Left colon (tissue), 2 donors: ENCODE measurements at regions of chr15 and their contacts with region 1.

Region 1: DNA sequence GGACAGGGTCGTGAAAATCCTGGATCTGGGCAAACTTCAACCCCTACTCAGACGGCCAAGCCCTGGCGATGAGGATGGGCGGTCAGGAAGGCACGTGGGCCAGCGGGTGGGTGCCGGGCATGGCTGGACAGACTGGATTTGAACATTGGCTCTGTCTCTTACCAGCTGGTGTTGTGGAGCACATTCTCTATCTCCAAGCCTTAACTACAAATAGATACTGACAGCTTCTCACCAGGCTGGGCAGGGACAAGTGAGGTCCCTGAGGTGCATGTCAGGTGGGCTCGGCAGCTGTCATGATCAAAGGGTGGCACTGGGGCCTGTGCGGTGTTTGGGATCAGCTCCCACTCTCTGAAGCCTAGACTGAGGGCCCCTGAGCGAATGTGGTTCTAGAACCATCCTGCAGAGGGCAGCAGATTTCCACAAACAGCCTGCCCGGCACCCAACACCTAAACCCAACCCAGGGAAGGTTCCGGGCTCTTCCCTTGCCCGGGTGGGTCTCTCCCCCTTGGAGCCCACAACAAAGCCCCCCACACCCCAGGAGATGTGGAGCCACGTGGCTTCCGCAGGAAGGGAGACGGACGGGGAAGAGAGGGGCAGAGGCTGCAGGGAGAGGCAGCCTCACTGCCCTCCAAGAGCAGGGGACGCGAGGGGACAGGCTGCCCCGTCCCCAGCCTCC is 58.4 kb downstream of the RGMA start:
- DNase-seq: peak in 1 of 2 donors; percentile 70
- ATAC-seq: peak; percentile 75

Region 2: GRCh38 chr15:92797168-92797951 is 233.2 kb before region 1 on chr15:
- intact Hi-C with region 1: loop called in 1 of 2 experiments (anchors 10 kb)
- DNase-seq: no peak
- ATAC-seq: peak; percentile 83

Region 3: GRCh38 chr15:94119923-94120775 is 1089.6 kb after region 1 on chr15:
- intact Hi-C with region 1: loop called (anchors 2 to 5 kb)
- DNase-seq: peak; percentile 38 to 47
- ATAC-seq: peak; percentile 99